ENCODE measurements at regions of chr22 and their contacts with region 1.

Region 1: GRCh38 chr22:19756288-19757128 is 4.1 kb upstream of the TBX1 start:
- DNase-seq: peak; percentile 83
- ATAC-seq: peak; percentile 73
- H3K4me3 Mint-ChIP-seq: peak overlapping the region; percentile 32
- H3K27ac Mint-ChIP-seq: no peak overlapping the region
- H3K4me1 Mint-ChIP-seq: peaks cover 25% of the 10 kb centered on the region
- H3K27me3 Mint-ChIP-seq: peaks cover 46% of the 10 kb centered on the region

Region 2: GRCh38 chr22:19723983-19724827 is 32.3 kb before region 1 on chr22:
- CTCF ChIA-PET with region 1: interaction called, 3 read pairs
- POLR2A ChIA-PET with region 1: no interaction called
- intact Hi-C with region 1: loop called in 1 of 2 experiments (anchors 2 kb)
- DNase-seq: peak; percentile 78
- ATAC-seq: peak; percentile 89
- H3K4me3 Mint-ChIP-seq: peak overlapping the region; percentile 19
- H3K27ac Mint-ChIP-seq: no peak overlapping the region
- H3K4me1 Mint-ChIP-seq: peaks cover 8% of the 10 kb centered on the region
- H3K27me3 Mint-ChIP-seq: peaks cover 35% of the 10 kb centered on the region

Region 3: GRCh38 chr22:19891317-19892256 is 135.1 kb after region 1 on chr22:
- CTCF ChIA-PET with region 1: no interaction called
- POLR2A ChIA-PET with region 1: no interaction called
- intact Hi-C with region 1: loop called in 1 of 2 experiments (anchors 5 kb)
- DNase-seq: peak; percentile 92
- ATAC-seq: peak; percentile 75
- H3K4me3 Mint-ChIP-seq: peak overlapping the region; percentile 72
- H3K27ac Mint-ChIP-seq: peak overlapping the region; percentile 95
- H3K4me1 Mint-ChIP-seq: peaks cover 86% of the 10 kb centered on the region
- H3K27me3 Mint-ChIP-seq: no peaks in the 10 kb centered on the region

Region 4: DNA sequence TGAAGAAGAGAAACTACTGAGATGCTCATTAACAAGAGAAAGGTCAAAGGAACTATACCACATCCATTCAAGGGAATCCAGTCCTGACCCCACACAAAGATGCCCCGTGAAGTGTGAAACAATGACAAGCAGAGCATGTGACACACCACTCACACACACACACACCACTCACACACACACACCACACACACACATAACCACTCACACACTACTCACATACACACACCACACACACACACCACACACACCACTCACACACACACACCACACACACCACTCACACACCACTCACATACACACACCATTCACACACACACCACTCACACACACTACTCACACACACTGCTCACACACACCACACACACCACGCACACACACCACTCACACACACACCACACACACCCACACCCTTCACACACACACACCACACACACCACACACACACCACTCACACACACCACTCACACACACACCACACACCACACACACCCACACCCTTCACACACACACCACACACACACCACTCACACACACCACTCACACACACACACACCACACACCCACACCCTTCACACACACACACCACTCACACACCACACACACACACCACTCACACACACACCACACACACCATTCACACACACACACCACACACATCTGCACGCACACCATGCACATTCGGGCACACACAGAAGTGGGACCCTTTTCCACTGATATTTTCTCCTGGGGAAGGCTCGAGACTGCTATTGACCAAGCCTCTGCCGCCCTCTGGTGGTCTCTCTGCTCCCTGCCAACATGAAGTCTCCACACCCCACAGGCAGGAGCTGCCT is 153.1 kb after region 1 on chr22:
- CTCF ChIA-PET with region 1: interaction called, 9 read pairs
- POLR2A ChIA-PET with region 1: no interaction called
- intact Hi-C with region 1: loop called in 1 of 2 experiments (anchors 1 kb)
- DNase-seq: peak; percentile 92
- ATAC-seq: peak; percentile 92
- H3K4me3 Mint-ChIP-seq: no peak overlapping the region
- H3K27ac Mint-ChIP-seq: peak overlapping the region; percentile 45
- H3K4me1 Mint-ChIP-seq: peaks cover 8% of the 10 kb centered on the region
- H3K27me3 Mint-ChIP-seq: no peaks in the 10 kb centered on the region

Region 5: DNA sequence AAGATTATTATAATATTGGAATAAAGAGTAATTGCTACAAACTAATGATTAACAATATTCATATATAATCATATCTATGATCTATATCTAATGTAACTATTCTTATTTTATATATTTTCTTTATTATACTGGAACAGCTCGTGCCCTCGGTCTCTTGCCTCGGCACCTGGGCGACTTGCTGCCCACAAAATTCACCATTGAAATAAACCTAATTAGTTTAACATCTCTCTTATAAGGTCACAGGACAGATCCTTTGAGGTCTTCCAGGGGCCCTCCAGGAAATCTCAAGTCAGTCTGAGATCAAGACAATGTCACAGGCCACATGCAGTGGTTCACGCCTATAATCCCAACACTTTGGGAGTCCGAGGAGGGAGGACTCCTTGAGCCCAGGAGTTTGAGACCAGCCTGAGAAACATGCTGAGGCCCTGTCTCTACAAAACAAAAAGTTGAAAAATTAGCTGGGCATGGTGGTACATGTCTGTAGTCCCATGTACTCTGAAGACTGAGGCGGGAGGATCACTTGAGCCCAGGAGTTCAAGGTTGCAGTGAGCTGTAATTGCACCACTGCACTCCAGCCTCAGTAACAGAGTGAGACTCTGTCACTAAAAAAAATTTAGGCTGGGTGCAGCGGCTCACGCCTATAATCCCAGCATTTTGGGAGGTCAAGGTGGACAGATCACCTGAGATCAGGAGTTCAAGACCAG is 191.7 kb after region 1 on chr22:
- CTCF ChIA-PET with region 1: interaction called, 12 read pairs
- POLR2A ChIA-PET with region 1: no interaction called
- intact Hi-C with region 1: no loop called
- DNase-seq: no peak
- ATAC-seq: no peak
- H3K4me3 Mint-ChIP-seq: no peak overlapping the region
- H3K27ac Mint-ChIP-seq: no peak overlapping the region
- H3K4me1 Mint-ChIP-seq: peaks cover 23% of the 10 kb centered on the region
- H3K27me3 Mint-ChIP-seq: no peaks in the 10 kb centered on the region

Measured in activated CD4-positive, alpha-beta T cell treated with anti-CD3 and anti-CD28 coated beads for 36 hours (primary cell).